Left cardiac atrium (tissue), 4 donors: ENCODE measurements at regions of chr6 and their contacts with region 1.

Region 1: GRCh38 chr6:134174672-134175198 is 122.3 kb upstream of the SLC2A12 start:
- DNase-seq: peak; percentile 95
- ATAC-seq: peak; percentile 89 to 90

Region 2: GRCh38 chr6:134340179-134340975 is 165.6 kb after region 1 on chr6:
- intact Hi-C with region 1: loop called in 1 of 2 experiments (anchors 5 kb)
- DNase-seq: no peak
- ATAC-seq: no peak

Region 3: DNA sequence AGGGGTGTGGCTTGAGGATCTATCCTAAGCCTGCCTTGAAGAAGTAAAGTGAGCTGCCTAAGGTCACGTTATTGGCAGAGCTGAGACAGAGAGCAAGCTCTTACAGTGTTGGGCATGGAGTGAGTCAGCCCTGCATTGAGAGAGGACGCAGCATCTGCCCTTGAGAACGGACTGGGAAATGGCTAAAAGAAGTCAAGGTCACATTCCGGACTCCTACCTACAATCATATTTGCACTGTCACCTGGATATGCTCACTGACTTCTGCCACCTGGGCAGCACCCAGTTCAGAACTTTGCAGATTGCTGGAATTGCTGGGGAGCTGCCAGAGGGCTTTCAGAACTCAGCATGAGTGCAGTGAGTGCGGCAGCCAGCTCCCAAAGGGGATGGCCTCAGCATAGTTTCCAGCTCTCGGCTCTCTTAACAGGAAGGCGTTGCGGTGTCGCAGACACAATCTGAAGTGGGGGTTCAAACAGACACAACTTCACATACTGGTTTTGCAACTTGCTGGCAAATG is 342.5 kb after region 1 on chr6:
- intact Hi-C with region 1: loop called in 1 of 2 experiments (anchors 5 kb)
- DNase-seq: peak; percentile 84
- ATAC-seq: peak; percentile 94 to 96

Region 4: GRCh38 chr6:134640975-134641429 is 466.3 kb after region 1 on chr6:
- intact Hi-C with region 1: loop called (anchors 1 to 5 kb)
- DNase-seq: peak; percentile 74
- ATAC-seq: peak; percentile 88 to 95

Region 5: DNA sequence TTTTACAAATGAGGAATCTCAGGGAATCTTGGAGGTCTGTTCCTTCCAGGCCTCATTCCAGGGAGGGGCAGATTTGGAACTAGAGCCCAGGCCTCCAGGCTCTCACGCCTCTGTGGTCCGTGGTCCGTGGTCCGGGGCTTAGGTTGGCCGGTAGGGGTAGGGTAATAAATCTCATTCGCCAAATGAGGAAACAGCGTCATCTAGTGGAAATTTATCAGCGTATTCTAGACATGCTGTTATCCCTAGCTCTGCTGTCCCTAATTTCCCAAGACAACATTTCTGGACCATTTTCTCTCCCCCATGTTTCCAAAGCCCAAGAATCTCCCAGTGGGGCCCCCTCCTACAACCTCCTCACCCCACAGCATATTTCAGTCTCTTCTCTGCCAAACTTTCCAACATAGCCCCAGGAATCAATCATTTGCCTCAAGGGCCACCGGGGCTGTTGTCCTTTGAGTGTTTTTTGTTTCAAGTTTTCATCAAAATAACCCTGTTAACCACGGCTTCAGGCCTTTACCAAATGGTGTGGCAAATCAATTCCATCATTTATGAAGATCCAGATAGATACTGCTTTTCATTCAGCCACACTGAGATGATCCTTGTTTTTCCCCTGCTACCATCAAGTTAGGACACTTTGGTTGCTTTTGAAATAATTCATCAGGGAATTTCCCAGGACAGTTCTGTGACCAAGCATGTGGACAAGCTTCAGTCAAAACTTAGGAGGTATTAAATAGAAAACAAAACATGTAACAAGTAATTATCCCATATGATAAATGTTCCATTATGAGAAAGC is 648.4 kb after region 1 on chr6:
- intact Hi-C with region 1: loop called (anchors 1 to 5 kb)
- DNase-seq: peak; percentile 47
- ATAC-seq: peak; percentile 78 to 90

Region 6: GRCh38 chr6:134882426-134883038 is 707.8 kb after region 1 on chr6:
- intact Hi-C with region 1: loop called in 1 of 2 experiments (anchors 5 kb)
- DNase-seq: peak; percentile 56
- ATAC-seq: peak; percentile 70 to 86

Region 7: GRCh38 chr6:134938896-134939295 is 764.2 kb after region 1 on chr6:
- intact Hi-C with region 1: loop called in 1 of 2 experiments (anchors 5 kb)
- DNase-seq: no peak
- ATAC-seq: no peak